Transverse colon (tissue), 4 donors: ENCODE measurements at regions of chr3 and their contacts with region 1.

Region 1: GRCh38 chr3:60490992-60491391 is 760.3 kb downstream of the FHIT start:
- DNase-seq: no peak
- H3K4me3 ChIP-seq: no peak overlapping the region
- H3K27ac ChIP-seq: no peak overlapping the region
- H3K4me1 ChIP-seq: no peaks in the 10 kb centered on the region
- H3K27me3 ChIP-seq: no peaks in the 10 kb centered on the region
- CTCF ChIP-seq: no peak
- EP300 ChIP-seq: no peak
- POLR2A ChIP-seq: no peak

Region 2: GRCh38 chr3:60514866-60515265 is 23.9 kb after region 1 on chr3:
- in situ Hi-C with region 1: no loop called
- intact Hi-C with region 1: loop called (anchors 2 kb)
- DNase-seq: no peak
- H3K4me3 ChIP-seq: no peak overlapping the region
- H3K27ac ChIP-seq: no peak overlapping the region
- H3K4me1 ChIP-seq: no peaks in the 10 kb centered on the region
- H3K27me3 ChIP-seq: no peaks in the 10 kb centered on the region
- CTCF ChIP-seq: no peak
- EP300 ChIP-seq: no peak
- POLR2A ChIP-seq: no peak